ENCODE measurements at regions of chr17 and their contacts with region 1.

Region 1: DNA sequence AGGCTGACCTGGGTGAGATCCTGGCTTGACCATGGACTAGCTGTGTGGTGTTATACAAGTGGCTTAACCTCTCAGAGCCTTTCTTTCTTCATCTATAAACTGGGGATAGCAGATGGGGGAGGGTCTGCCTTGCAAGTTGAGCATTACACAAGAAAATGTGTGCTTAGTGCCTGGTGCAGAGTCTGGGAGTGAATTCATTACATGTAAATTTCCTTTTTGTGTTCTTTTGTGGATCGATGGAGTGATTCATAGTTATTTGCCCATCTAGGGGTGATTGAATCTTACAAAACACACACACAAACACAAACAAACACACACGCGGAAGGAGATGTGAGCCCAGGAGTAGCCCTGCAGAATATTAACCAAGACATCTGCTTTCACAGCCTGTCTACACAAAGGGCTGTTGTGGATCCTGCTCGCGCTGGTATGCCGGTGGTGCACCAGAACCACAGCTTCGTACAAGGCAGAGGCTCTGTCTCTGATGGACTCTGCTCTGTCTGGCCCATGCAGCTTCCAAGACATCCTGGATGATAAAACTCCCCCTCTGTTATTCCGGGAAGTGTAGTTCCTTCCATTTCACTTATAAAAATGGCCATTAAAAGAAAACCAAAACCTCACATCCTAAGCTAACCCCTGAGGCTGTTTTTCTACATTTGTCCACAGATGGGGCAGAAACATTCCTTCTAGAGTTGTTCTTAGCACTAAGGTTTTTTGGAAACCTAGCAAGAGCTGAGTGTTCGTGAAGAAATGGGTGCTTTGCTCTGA is 86.1 kb downstream of the UTP18 start:
- DNase-seq: no peak

Region 2: GRCh38 chr17:51472670-51473205 is 126.3 kb after region 1 on chr17:
- intact Hi-C with region 1: loop called in 1 of 2 experiments (anchors 5 kb)
- DNase-seq: no peak

Measured in posterior vena cava (tissue), 2 donors.